OCI-LY7 (cell line): ENCODE measurements at regions of chr15 and their contacts with region 1.

Region 1: GRCh38 chr15:29196290-29196689 is 73.3 kb downstream of the NSMCE3 start:
- DNase-seq: no peak
- H3K4me3 ChIP-seq: no peak overlapping the region
- H3K27ac ChIP-seq: no peak overlapping the region
- H3K4me1 ChIP-seq: no peaks in the 10 kb centered on the region
- CTCF ChIP-seq: no peak

Region 2: GRCh38 chr15:29220852-29221251 is 24.6 kb after region 1 on chr15:
- CTCF ChIA-PET with region 1: no interaction called
- POLR2A ChIA-PET with region 1: no interaction called
- intact Hi-C with region 1: loop called (anchors 2 kb)
- DNase-seq: no peak
- H3K4me3 ChIP-seq: no peak overlapping the region
- H3K27ac ChIP-seq: no peak overlapping the region
- H3K4me1 ChIP-seq: no peaks in the 10 kb centered on the region
- CTCF ChIP-seq: no peak

Region 3: DNA sequence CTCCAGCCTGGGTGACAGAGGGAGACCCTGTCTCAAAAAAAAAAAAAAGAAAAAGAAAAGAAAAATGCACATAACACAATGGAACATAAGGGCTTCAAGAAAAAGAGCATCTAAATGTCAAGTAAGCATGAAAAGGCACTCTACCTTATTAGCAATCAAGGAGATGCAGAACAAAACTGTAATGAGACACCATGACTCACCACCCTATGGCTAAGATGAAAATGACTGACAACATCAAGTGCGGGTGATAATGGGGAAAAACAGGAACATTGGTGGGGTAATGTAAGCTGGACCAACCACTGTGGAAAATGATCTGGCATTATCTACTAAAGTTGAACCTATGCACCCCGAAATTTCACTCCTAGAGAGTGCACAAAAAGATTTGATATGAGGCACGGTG is 92.9 kb after region 1 on chr15:
- CTCF ChIA-PET with region 1: no interaction called
- POLR2A ChIA-PET with region 1: no interaction called
- intact Hi-C with region 1: no loop called
- DNase-seq: no peak
- H3K4me3 ChIP-seq: no peak overlapping the region
- H3K27ac ChIP-seq: no peak overlapping the region
- H3K4me1 ChIP-seq: no peaks in the 10 kb centered on the region
- CTCF ChIP-seq: no peak